B cell (primary cell): ENCODE measurements at regions of chr19 and their contacts with region 1.

Region 1: DNA sequence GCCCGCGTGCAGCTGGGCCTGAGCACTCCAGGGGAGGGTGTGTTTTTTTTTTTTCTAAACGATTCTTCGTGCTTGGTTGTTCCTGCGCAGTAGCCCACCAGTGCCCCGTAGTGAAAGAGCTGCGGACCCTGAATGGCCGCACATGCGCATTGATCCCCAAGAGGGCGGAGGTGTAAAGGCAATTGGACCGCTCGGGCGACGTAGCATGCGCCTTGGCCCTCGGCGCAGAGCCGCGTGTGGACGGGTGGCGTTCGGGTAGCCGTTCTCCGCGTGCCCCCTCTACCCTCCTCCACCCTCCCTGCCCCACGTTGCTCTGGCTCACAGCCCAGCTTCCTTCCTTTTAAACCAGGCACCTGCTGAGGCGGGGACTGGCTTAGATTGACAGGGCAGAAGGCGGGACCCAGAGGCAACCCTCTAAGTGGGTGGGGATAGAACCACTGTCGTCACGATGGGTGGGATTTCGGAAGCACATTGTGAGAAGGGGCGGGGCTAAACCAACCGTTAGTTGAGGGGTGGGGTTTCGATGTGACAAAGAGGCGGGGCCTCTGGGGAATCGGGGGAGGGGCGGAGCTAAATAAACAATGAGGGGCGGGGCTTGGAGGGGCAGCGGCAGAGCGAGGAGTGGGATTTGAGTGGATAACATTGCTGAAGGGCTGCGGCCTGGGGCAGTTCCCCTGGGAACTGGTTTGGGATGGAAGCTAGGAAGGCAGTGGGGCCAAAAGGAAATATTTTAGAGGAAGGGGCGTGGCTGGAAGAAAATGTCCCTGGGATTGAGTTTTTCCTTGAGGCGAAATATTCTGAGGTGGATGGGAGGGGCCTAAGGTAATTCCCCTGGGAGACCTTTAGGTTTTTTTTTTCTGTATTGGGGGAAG is 543 bp upstream of the NUP62 start:
- DNase-seq: peak; percentile 99
- ATAC-seq: peak; percentile 84
- H3K4me3 ChIP-seq: peak overlapping the region; percentile 70 to 98 (median 89)
- H3K4me3 Mint-ChIP-seq: peak overlapping the region; percentile 100
- H3K27ac ChIP-seq: peak overlapping the region; percentile 80 to 97
- H3K27ac Mint-ChIP-seq: peak overlapping the region; percentile 98
- H3K4me1 ChIP-seq: peaks cover 20 to 32% of the 10 kb centered on the region in 2 donors
- H3K4me1 Mint-ChIP-seq: peaks cover 53% of the 10 kb centered on the region
- H3K27me3 ChIP-seq: no peaks in the 10 kb centered on the region
- H3K27me3 Mint-ChIP-seq: no peaks in the 10 kb centered on the region
- CTCF ChIP-seq: no peak

Region 2: GRCh38 chr19:49758292-49758691 is 171.6 kb before region 1 on chr19:
- CTCF ChIA-PET with region 1: no interaction called
- POLR2A ChIA-PET with region 1: no interaction called
- intact Hi-C with region 1: no loop called
- DNase-seq: no peak
- ATAC-seq: no peak
- H3K4me3 ChIP-seq: no peak overlapping the region
- H3K4me3 Mint-ChIP-seq: no peak overlapping the region
- H3K27ac ChIP-seq: no peak overlapping the region
- H3K27ac Mint-ChIP-seq: no peak overlapping the region
- H3K4me1 ChIP-seq: no peaks in the 10 kb centered on the region
- H3K4me1 Mint-ChIP-seq: no peaks in the 10 kb centered on the region
- H3K27me3 ChIP-seq: peaks cover 0 to 3% (median 0%) of the 10 kb centered on the region in 4 experiments
- H3K27me3 Mint-ChIP-seq: no peaks in the 10 kb centered on the region
- CTCF ChIP-seq: no peak

Region 3: DNA sequence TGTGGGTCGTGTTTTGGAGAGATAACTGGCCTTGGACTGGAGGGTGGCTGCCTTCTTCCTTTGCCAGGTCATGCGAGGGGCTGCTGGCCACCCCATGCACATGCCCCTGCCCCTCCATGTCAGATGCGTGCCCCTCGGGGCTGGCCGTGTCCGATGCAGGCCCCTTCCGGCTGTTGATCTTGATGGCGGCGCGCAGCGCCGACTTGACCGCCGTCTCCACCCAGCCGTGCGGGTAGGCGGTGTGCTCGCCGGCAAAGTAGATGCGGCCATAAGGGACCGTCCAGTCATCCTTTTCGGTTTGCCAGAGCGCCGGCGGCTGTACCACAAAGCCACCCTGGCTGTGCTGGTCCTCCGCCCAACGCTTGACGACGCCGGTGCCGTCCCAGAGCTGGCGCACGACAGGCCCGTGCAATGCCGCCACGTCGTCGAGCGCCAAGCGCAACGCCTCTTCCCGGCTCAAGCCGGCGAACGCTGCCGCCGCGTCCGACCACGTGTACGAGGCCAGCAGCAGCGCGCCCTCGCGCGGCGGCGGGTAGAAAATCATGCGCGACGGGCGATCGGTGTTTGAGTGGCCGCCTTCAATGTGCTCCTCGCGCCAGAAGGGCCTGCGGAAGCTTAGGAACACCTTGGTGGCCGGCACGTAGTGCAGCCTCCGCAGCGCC is 40.0 kb before region 1 on chr19:
- CTCF ChIA-PET with region 1: interaction called, 3 read pairs
- POLR2A ChIA-PET with region 1: interaction called, 10 read pairs
- intact Hi-C with region 1: loop called (anchors 1 kb)
- DNase-seq: peak; percentile 88
- ATAC-seq: peak; percentile 68
- H3K4me3 ChIP-seq: peak overlapping the region in 4 of 5 experiments; percentile 41 to 62 (median 50)
- H3K4me3 Mint-ChIP-seq: peak overlapping the region; percentile 86
- H3K27ac ChIP-seq: no peak overlapping the region
- H3K27ac Mint-ChIP-seq: peak overlapping the region; percentile 67
- H3K4me1 ChIP-seq: peaks cover 3 to 17% of the 10 kb centered on the region in 2 donors
- H3K4me1 Mint-ChIP-seq: peaks cover 27% of the 10 kb centered on the region
- H3K27me3 ChIP-seq: no peaks in the 10 kb centered on the region
- H3K27me3 Mint-ChIP-seq: no peaks in the 10 kb centered on the region
- CTCF ChIP-seq: peak; percentile 89

Region 4: GRCh38 chr19:49896863-49897621 is 32.8 kb before region 1 on chr19 and contains the start of gene IL4I1:
- CTCF ChIA-PET with region 1: interaction called, 8 read pairs
- POLR2A ChIA-PET with region 1: interaction called, 10 read pairs
- intact Hi-C with region 1: loop called (anchors 1 kb)
- DNase-seq: peak; percentile 91
- ATAC-seq: peak; percentile 74
- H3K4me3 ChIP-seq: peak within 1 kb of the TSS; percentile 34 to 60 (median 44)
- H3K4me3 Mint-ChIP-seq: peak within 1 kb of the TSS; percentile 89
- H3K27ac ChIP-seq: peak within 1 kb of the TSS; percentile 82 to 84
- H3K27ac Mint-ChIP-seq: peak within 1 kb of the TSS; percentile 97
- H3K4me1 ChIP-seq: peaks cover 30 to 39% of the 10 kb centered on the region in 2 donors
- H3K4me1 Mint-ChIP-seq: peaks cover 40% of the 10 kb centered on the region
- H3K27me3 ChIP-seq: no peaks in the 10 kb centered on the region
- H3K27me3 Mint-ChIP-seq: no peaks in the 10 kb centered on the region
- CTCF ChIP-seq: no peak
- total RNA-seq, gene IL4I1: 3.1 and 3.9 TPM in 2 replicates

Region 5: GRCh38 chr19:49911381-49912145 is 18.3 kb before region 1 on chr19:
- CTCF ChIA-PET with region 1: interaction called, 15 read pairs
- POLR2A ChIA-PET with region 1: interaction called, 28 read pairs
- intact Hi-C with region 1: no loop called
- DNase-seq: peak; percentile 75
- ATAC-seq: peak; percentile 63
- H3K4me3 ChIP-seq: no peak overlapping the region
- H3K4me3 Mint-ChIP-seq: peak overlapping the region; percentile 71
- H3K27ac ChIP-seq: peak overlapping the region; percentile 60 to 82
- H3K27ac Mint-ChIP-seq: peak overlapping the region; percentile 93
- H3K4me1 ChIP-seq: peaks cover 33 to 42% of the 10 kb centered on the region in 2 donors
- H3K4me1 Mint-ChIP-seq: peaks cover 66% of the 10 kb centered on the region
- H3K27me3 ChIP-seq: no peaks in the 10 kb centered on the region
- H3K27me3 Mint-ChIP-seq: no peaks in the 10 kb centered on the region
- CTCF ChIP-seq: no peak

Region 6: DNA sequence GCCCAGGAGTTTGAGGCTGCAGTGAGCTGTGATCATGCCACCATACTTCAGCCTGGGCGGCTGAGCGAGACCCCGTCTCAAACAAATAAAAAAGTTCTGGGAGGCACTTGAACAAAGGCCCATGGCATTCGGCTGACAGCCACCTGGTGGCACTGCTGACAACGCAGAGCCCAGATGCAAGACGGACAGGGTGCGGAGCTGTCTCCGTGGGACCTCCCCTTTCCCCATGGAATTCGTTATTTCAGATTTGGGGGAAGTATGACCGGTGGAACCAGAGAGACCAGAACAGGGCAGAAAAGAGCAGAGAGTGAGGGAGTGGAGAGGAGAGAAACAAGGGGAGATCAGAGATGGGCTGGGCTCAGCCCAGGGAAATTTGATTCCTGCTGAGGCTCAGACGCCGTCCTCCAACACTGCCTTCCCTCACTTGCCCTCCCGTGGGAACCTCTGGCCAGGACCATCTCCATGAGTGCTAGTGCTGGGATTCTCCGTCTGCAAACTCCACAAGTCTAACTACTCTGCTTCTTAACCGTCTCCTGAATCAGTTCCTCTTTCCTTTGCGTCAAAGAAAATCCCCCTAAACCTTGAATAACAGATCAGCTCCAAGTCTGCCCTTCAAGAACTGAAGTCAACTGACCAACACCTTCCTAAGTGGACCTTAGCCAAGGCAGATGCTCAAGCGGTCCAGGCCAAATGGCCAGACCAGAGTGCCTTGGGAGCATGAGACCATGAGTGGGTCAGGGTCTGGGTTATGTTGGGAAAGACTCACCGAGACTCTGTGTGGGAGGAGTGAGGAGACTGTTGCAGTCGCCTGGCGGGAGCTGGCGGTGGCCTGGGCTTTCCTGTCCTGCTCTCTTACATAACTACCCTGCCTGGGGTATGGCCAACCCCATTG is 12.8 kb before region 1 on chr19:
- CTCF ChIA-PET with region 1: interaction called, 15 read pairs
- POLR2A ChIA-PET with region 1: interaction called, 28 read pairs
- intact Hi-C with region 1: no loop called
- DNase-seq: no peak
- ATAC-seq: peak; percentile 67
- H3K4me3 ChIP-seq: no peak overlapping the region
- H3K4me3 Mint-ChIP-seq: peak overlapping the region; percentile 88
- H3K27ac ChIP-seq: peak overlapping the region; percentile 34 to 50
- H3K27ac Mint-ChIP-seq: peak overlapping the region; percentile 95
- H3K4me1 ChIP-seq: peaks cover 0 to 6% of the 10 kb centered on the region in 2 donors
- H3K4me1 Mint-ChIP-seq: peaks cover 54% of the 10 kb centered on the region
- H3K27me3 ChIP-seq: no peaks in the 10 kb centered on the region
- H3K27me3 Mint-ChIP-seq: no peaks in the 10 kb centered on the region
- CTCF ChIP-seq: peak; percentile 47